Dendritic cell treated with granulocyte-macrophage colony-stimulating factor and Interleukin-4, amounts not matched to agents 40 ng/mL and 50 ng/mL, for 4 days (primary cell): ENCODE measurements at regions of chr12 and their contacts with region 1.

Region 1: GRCh38 chr12:11085419-11085818 is 6.7 kb downstream of the TAS2R43 start:
- H3K4me3 Mint-ChIP-seq: no peak overlapping the region
- H3K27ac Mint-ChIP-seq: no peak overlapping the region
- H3K4me1 Mint-ChIP-seq: no peaks in the 10 kb centered on the region
- H3K27me3 Mint-ChIP-seq: no peaks in the 10 kb centered on the region

Region 2: GRCh38 chr12:11055306-11055705 is 30.1 kb before region 1 on chr12:
- intact Hi-C with region 1: loop called (anchors 2 kb)
- H3K4me3 Mint-ChIP-seq: no peak overlapping the region
- H3K27ac Mint-ChIP-seq: no peak overlapping the region
- H3K4me1 Mint-ChIP-seq: no peaks in the 10 kb centered on the region
- H3K27me3 Mint-ChIP-seq: no peaks in the 10 kb centered on the region

Region 3: GRCh38 chr12:11130382-11130781 is 45.0 kb after region 1 on chr12:
- intact Hi-C with region 1: loop called (anchors 1 kb)
- H3K4me3 Mint-ChIP-seq: no peak overlapping the region
- H3K27ac Mint-ChIP-seq: no peak overlapping the region
- H3K4me1 Mint-ChIP-seq: peaks cover 2% of the 10 kb centered on the region
- H3K27me3 Mint-ChIP-seq: no peaks in the 10 kb centered on the region